CD8-positive, alpha-beta T cell (primary cell): ENCODE measurements at regions of chr4 and their contacts with region 1.

Region 1: DNA sequence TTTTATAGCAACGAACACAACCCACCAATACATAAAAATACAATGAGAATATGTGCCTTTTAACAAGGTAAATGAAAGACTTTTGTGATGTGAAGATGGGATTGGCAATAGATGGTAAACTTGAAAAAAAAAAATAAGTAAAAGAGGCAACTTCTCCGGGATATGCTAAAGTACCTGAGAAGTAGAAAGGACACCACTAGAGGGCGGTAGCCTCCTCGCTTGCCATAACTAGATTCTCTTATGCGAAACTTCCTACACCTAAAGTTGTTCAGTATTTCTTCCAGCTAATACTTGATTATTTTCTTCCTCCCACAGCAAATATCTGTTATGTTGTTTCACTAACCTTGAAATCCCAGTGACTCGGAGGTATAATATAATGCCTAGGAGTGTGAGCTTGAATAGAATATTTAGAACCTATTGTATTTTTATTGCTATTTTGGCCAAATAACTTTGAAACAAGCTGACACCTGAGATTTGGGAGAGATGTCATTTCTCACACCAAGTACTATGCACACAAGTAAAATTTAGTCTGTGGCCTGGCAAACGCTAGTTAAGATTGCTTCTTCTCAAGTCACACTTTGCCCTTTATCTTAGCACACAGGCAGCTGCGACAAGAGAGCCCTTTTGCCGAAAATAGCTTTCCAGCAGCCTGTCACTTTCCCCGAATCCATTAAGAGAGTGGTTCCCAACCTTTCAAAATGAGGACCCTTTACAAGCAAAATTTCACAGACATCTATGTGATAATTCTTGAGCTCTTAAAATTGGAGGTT is 44.9 kb upstream of the PDLIM5 start:
- DNase-seq: peak; percentile 12 to 82 (median 58)
- ATAC-seq: peak; percentile 52
- H3K4me3 ChIP-seq: no peak overlapping the region
- H3K4me3 Mint-ChIP-seq: no peak overlapping the region
- H3K27ac ChIP-seq: no peak overlapping the region
- H3K27ac Mint-ChIP-seq: no peak overlapping the region
- H3K4me1 ChIP-seq: no peaks in the 10 kb centered on the region
- H3K4me1 Mint-ChIP-seq: no peaks in the 10 kb centered on the region
- H3K27me3 ChIP-seq: no peaks in the 10 kb centered on the region
- H3K27me3 Mint-ChIP-seq: peaks cover 8% of the 10 kb centered on the region
- CTCF ChIP-seq: peak; percentile 90

Region 2: GRCh38 chr4:94262163-94263016 is 144.5 kb before region 1 on chr4:
- CTCF ChIA-PET with region 1: no interaction called
- POLR2A ChIA-PET with region 1: no interaction called
- intact Hi-C with region 1: no loop called
- DNase-seq: no peak
- ATAC-seq: no peak
- H3K4me3 ChIP-seq: no peak overlapping the region
- H3K4me3 Mint-ChIP-seq: no peak overlapping the region
- H3K27ac ChIP-seq: no peak overlapping the region
- H3K27ac Mint-ChIP-seq: no peak overlapping the region
- H3K4me1 ChIP-seq: no peaks in the 10 kb centered on the region
- H3K4me1 Mint-ChIP-seq: peaks cover 5% of the 10 kb centered on the region
- H3K27me3 ChIP-seq: no peaks in the 10 kb centered on the region
- H3K27me3 Mint-ChIP-seq: no peaks in the 10 kb centered on the region
- CTCF ChIP-seq: no peak

Region 3: DNA sequence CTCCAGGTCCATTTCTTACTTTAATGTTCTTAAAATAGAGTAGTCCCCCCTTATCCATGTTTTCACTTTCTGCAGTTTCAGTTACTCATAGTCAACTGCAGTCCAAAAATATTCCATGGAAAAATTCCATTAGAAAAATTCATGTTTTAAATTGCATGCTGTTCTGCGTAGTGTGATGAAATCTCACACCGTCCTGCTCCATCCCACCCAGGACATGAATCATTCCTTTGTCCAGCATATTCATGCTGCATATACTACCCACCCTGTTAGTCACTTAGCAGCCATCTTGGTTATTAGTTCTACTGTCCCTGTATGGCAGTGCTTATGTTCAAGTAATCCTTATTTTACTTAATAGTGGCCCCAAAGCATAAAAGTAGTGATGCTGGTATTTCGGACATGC is 39.5 kb after region 1 on chr4:
- CTCF ChIA-PET with region 1: interaction called, 10 read pairs
- POLR2A ChIA-PET with region 1: no interaction called
- intact Hi-C with region 1: loop called in 1 of 2 experiments (anchors 5 kb)
- DNase-seq: no peak
- ATAC-seq: no peak
- H3K4me3 ChIP-seq: no peak overlapping the region
- H3K4me3 Mint-ChIP-seq: no peak overlapping the region
- H3K27ac ChIP-seq: no peak overlapping the region
- H3K27ac Mint-ChIP-seq: no peak overlapping the region
- H3K4me1 ChIP-seq: peaks cover 6% of the 10 kb centered on the region
- H3K4me1 Mint-ChIP-seq: peaks cover 5% of the 10 kb centered on the region
- H3K27me3 ChIP-seq: peaks cover 0 to 5% of the 10 kb centered on the region in 2 experiments
- H3K27me3 Mint-ChIP-seq: peaks cover 16% of the 10 kb centered on the region
- CTCF ChIP-seq: no peak

Region 4: DNA sequence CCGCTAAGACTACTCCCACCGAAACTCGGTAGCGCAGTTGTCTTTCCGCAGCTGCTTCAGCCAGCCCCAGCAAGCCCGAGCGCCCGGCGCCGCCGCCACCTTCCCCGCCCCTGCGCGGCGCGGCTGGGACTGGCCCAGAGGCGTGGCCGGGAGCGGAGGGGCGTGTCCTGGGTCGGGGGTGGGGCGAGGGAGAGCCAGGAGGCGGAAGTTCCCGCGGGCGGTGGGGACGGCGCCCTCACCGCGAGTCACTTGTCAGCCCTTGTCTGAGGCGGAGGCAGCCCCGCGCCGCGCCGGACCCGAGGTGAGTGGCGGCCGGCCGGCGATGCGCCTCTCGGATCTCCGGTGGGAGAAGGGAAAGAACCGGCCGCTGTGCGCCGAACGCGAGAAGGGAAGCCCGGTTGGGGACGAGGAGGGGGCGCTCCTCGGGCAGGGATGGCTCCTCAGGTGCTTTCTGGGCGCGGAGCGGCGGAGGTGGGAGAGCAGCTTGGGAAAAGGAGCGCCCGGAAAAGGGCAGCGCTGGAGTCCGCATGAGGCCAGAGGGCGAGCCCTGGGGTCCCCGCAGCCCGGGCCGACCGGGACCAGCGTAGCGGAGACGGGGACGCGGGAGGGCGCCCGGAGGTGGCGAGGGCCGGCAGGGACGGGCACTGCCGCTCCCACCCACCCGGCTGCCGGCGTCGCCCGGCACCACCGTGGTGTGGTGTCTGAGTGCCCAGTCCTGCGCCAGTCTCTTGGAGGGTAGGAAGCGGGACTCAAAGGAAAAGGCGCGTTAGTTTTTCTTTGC is 45.0 kb after region 1 on chr4 and contains the start of gene PDLIM5:
- CTCF ChIA-PET with region 1: interaction called, 10 read pairs
- POLR2A ChIA-PET with region 1: no interaction called
- intact Hi-C with region 1: loop called in 1 of 2 experiments (anchors 5 kb)
- DNase-seq: peak; percentile 77 to 95 (median 88)
- ATAC-seq: peak; percentile 97
- H3K4me3 ChIP-seq: peak within 1 kb of the TSS; percentile 68 to 93
- H3K4me3 Mint-ChIP-seq: peak within 1 kb of the TSS; percentile 88
- H3K27ac ChIP-seq: peak within 1 kb of the TSS; percentile 39 to 49
- H3K27ac Mint-ChIP-seq: peak within 1 kb of the TSS; percentile 84
- H3K4me1 ChIP-seq: peaks cover 14% of the 10 kb centered on the region
- H3K4me1 Mint-ChIP-seq: peaks cover 25% of the 10 kb centered on the region
- H3K27me3 ChIP-seq: peaks cover 0 to 5% of the 10 kb centered on the region in 2 experiments
- H3K27me3 Mint-ChIP-seq: peaks cover 16% of the 10 kb centered on the region
- CTCF ChIP-seq: no peak
- total RNA-seq, gene PDLIM5: 21.6 to 22.9 TPM

Region 5: GRCh38 chr4:94595879-94596483 is 189.1 kb after region 1 on chr4:
- CTCF ChIA-PET with region 1: interaction called, 20 read pairs
- POLR2A ChIA-PET with region 1: no interaction called
- intact Hi-C with region 1: loop called (anchors 1 kb)
- DNase-seq: peak in 2 of 9 experiments; percentile 43 to 61
- ATAC-seq: peak; percentile 49
- H3K4me3 ChIP-seq: no peak overlapping the region
- H3K4me3 Mint-ChIP-seq: no peak overlapping the region
- H3K27ac ChIP-seq: no peak overlapping the region
- H3K27ac Mint-ChIP-seq: no peak overlapping the region
- H3K4me1 ChIP-seq: no peaks in the 10 kb centered on the region
- H3K4me1 Mint-ChIP-seq: no peaks in the 10 kb centered on the region
- H3K27me3 ChIP-seq: no peaks in the 10 kb centered on the region
- H3K27me3 Mint-ChIP-seq: no peaks in the 10 kb centered on the region
- CTCF ChIP-seq: peak; percentile 89